PC-3 (cell line): ENCODE measurements at regions of chr5 and their contacts with region 1.

Region 1: DNA sequence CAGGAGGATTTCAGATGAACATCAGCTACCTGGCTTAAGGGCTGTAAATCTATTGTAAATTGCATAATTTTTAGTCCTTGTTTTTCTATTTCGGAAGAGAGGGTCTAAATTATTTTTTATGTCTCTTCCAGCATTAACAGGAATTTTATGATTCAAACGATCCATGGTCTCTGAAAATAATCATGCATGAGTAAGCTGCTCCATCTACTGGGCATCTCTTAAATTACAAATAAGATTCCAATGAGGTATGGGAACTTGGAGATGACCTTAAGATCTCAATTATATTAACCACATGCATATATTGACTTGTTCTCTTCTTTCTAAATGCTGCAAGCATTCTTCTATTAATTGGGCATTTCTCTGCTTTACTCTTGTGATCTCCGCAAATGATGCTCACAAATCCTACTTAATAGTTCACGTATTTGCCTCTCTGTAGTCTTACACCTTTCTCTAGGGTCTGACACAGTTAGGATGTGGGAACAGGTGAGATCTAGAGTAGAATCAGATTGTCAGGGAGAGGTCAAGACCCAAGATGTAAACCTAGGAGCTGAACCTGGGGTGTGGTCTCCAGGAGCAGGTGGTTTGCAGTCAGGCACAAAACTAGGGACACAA is 86.9 kb downstream of the NUDT12 start:
- DNase-seq: peak; percentile 91
- ATAC-seq: peak; percentile 61
- H3K4me3 ChIP-seq: no peak overlapping the region
- H3K27ac ChIP-seq: no peak overlapping the region
- H3K4me1 ChIP-seq: peaks cover 23% of the 10 kb centered on the region
- H3K27me3 ChIP-seq: no peaks in the 10 kb centered on the region
- CTCF ChIP-seq: peak; percentile 95

Region 2: DNA sequence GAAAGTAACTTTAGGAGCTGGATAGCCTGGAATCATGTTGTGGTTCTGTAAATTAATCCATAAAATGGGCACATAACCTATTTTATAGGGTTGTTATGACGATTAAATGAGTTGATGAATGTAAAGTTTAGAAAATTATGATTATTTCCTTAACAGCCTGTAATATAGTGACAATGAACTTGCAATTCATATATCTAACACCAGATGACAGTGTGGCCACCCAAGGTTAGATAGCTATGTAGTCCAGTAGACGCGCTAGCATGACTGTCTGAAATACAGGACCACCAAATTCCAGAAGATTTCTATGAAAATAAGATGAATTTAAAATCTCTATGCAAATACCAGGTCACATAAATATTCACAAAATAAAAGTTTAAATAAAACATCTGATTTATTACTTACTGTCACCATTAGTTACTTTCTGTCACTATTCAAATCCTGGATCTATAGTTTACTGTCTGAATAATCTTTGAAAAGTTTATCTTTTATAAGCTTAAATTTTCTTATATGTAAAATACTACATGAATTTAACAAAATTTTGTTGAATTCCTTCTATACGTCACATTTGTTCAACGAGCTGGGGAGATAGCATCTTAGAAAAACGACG is 243.2 kb before region 1 on chr5:
- CTCF ChIA-PET with region 1: interaction called, 27 read pairs
- POLR2A ChIA-PET with region 1: no interaction called
- intact Hi-C with region 1: loop called (anchors 1 kb)
- DNase-seq: peak; percentile 77
- ATAC-seq: peak; percentile 90
- H3K4me3 ChIP-seq: no peak overlapping the region
- H3K27ac ChIP-seq: no peak overlapping the region
- H3K4me1 ChIP-seq: 0 out of 2 replicates have a peak, but pooled peaks cover 4% of the 10 kb centered on the region
- H3K27me3 ChIP-seq: no peaks in the 10 kb centered on the region
- CTCF ChIP-seq: peak; percentile 97

Region 3: DNA sequence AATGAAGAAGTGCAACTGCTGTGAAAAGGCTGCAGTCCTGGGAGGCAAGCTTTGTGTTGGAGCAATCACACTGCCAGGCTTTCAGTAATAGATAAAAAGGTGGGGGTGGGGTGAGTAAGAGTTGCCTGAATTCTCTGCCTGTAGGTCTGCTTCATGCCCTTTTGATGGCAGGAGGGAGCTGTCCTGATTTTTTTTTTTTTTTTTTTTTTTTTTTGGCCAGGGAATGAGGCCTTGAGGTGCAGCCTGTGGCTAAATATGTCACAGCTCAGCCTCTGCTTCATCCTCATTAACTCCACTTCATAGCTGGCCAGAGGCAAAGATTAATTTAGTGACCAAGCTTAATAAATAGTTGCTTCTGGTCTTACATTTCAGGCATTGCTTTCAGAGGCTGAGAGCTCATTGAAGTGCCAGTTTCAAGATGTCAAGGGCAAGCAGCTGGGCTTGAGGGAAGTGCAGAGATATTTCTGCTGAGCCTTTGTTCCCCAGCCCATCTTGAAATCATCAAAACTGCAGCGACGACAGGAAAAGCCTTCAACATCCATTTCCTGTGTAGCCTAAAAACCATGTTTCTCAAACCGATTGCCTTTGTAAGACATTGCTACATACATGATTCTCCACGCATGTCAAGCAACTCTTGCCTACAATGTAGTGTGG is 82.5 kb before region 1 on chr5:
- CTCF ChIA-PET with region 1: interaction called, 16 read pairs
- POLR2A ChIA-PET with region 1: no interaction called
- intact Hi-C with region 1: loop called (anchors 1 kb)
- DNase-seq: peak; percentile 31
- ATAC-seq: peak; percentile 19; the same call in 1 of the 2 replicates
- H3K4me3 ChIP-seq: no peak overlapping the region
- H3K27ac ChIP-seq: no peak overlapping the region
- H3K4me1 ChIP-seq: peaks cover 9% of the 10 kb centered on the region
- H3K27me3 ChIP-seq: no peaks in the 10 kb centered on the region
- CTCF ChIP-seq: peak; percentile 40

Region 4: GRCh38 chr5:103428411-103428871 is 47.3 kb before region 1 on chr5:
- CTCF ChIA-PET with region 1: no interaction called
- POLR2A ChIA-PET with region 1: no interaction called
- intact Hi-C with region 1: loop called (anchors 5 kb)
- DNase-seq: peak; percentile 43
- ATAC-seq: peak; percentile 62
- H3K4me3 ChIP-seq: no peak overlapping the region
- H3K27ac ChIP-seq: no peak overlapping the region
- H3K4me1 ChIP-seq: peaks cover 17% of the 10 kb centered on the region
- H3K27me3 ChIP-seq: no peaks in the 10 kb centered on the region
- CTCF ChIP-seq: no peak

Region 5: DNA sequence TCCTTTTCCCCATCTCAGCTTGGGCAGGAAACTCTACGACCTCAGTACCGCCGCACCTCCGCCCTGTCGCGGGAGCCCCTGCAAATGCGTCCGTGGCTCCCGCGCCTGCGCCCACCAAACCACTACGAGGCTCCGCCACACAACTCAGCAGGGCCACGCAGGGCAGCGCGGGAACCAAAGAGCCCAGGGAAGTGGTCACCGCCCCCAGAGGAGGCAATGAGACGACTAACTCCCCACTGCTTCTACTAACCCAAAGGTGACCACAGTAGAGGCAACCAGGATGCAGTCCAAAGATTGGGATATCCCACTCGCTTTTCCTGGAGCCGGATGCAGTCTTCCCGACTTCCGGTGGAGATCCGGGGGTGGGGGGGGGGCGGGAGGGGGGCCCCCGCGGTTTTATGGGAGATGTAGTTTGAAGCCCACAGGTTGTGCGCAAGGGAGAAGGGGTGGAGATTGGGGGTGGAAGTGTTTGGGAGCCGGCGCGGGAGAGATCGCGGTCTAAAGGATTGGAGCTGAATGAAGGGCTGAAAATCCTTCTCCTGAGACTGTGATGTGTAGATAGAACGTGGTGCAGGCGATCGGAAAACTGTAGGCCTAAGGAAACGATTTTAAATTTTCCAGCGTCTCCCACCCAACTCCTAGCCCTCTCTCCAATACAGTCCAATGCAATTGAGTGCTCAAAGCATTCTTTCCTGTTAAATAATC is 86.9 kb after region 1 on chr5 and contains the start of gene NUDT12:
- CTCF ChIA-PET with region 1: no interaction called
- POLR2A ChIA-PET with region 1: no interaction called
- intact Hi-C with region 1: loop called (anchors 5 kb)
- DNase-seq: peak; percentile 86
- ATAC-seq: peak; percentile 91
- H3K4me3 ChIP-seq: peak within 1 kb of the TSS; percentile 77
- H3K27ac ChIP-seq: peak within 1 kb of the TSS; percentile 76
- H3K4me1 ChIP-seq: peaks cover 16% of the 10 kb centered on the region
- H3K27me3 ChIP-seq: no peaks in the 10 kb centered on the region
- CTCF ChIP-seq: no peak
- total RNA-seq, gene NUDT12: 9.2 and 10.9 TPM in 2 replicates